ENCODE measurements at regions of chr7 and their contacts with region 1.

Region 1: GRCh38 chr7:149497456-149498261 is at the start of gene ZNF746:
- DNase-seq: peak; percentile 79
- ATAC-seq: peak; percentile 96
- H3K4me3 Mint-ChIP-seq: peak within 1 kb of the TSS; percentile 92
- H3K27ac Mint-ChIP-seq: peak within 1 kb of the TSS; percentile 82
- H3K4me1 Mint-ChIP-seq: peaks cover 24% of the 10 kb centered on the region
- H3K27me3 Mint-ChIP-seq: peaks cover 2% of the 10 kb centered on the region
- CTCF ChIP-seq: no peak
- total RNA-seq, gene ZNF746: 21.0 and 28.4 TPM in 2 replicates

Region 2: DNA sequence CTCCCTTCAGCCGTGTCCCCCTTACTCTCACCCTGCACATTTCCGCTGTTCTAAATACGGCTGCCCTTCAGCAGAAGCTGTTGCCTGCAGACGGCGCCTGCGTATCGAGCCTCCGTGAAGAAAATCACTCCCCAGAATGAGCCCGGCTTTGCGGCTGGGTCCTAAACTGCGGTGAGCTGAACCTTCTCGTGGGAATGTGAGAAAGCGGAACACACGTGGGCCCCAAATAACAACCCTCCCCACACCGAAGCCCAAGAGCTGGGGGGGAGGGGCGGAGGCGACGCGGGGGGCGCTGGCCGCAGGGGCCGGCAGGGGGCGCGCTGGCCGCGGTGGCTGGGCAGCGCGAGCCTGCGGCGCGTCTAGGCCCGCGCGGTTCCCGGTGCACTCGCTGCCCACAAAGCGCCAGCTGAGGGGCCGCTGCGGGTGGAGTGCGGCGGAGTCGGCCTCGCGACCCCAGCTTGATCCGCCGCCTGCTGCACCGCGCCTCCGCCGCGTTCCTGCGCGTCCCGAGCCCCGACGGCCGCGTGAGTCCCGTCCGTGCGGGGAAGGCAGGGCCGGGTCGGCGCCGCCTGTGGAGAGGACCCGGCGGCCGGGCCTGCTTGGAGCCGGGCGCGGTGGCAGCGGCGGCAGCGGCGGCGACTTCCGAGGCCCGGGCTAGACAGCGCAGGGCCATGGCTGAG is 350.4 kb before region 1 on chr7 and contains the start of gene ZNF398:
- CTCF ChIA-PET with region 1: no interaction called
- POLR2A ChIA-PET with region 1: no interaction called
- intact Hi-C with region 1: loop called (anchors 1 kb)
- DNase-seq: peak; percentile 87
- ATAC-seq: peak; percentile 84
- H3K4me3 Mint-ChIP-seq: peak within 1 kb of the TSS; percentile 91
- H3K27ac Mint-ChIP-seq: peak within 1 kb of the TSS; percentile 94
- H3K4me1 Mint-ChIP-seq: peaks cover 32% of the 10 kb centered on the region
- H3K27me3 Mint-ChIP-seq: no peaks in the 10 kb centered on the region
- CTCF ChIP-seq: no peak
- total RNA-seq, gene ZNF398: 15.1 and 17.3 TPM in 2 replicates

Region 3: GRCh38 chr7:149239345-149240191 is 258.1 kb before region 1 on chr7 and contains the start of gene ZNF212:
- CTCF ChIA-PET with region 1: no interaction called
- POLR2A ChIA-PET with region 1: no interaction called
- intact Hi-C with region 1: loop called (anchors 1 kb)
- DNase-seq: peak; percentile 82
- ATAC-seq: peak; percentile 99
- H3K4me3 Mint-ChIP-seq: peak within 1 kb of the TSS; percentile 91
- H3K27ac Mint-ChIP-seq: peak within 1 kb of the TSS; percentile 76
- H3K4me1 Mint-ChIP-seq: peaks cover 37% of the 10 kb centered on the region
- H3K27me3 Mint-ChIP-seq: no peaks in the 10 kb centered on the region
- CTCF ChIP-seq: no peak
- total RNA-seq, gene ZNF212: 17.0 and 21.0 TPM in 2 replicates

Region 4: DNA sequence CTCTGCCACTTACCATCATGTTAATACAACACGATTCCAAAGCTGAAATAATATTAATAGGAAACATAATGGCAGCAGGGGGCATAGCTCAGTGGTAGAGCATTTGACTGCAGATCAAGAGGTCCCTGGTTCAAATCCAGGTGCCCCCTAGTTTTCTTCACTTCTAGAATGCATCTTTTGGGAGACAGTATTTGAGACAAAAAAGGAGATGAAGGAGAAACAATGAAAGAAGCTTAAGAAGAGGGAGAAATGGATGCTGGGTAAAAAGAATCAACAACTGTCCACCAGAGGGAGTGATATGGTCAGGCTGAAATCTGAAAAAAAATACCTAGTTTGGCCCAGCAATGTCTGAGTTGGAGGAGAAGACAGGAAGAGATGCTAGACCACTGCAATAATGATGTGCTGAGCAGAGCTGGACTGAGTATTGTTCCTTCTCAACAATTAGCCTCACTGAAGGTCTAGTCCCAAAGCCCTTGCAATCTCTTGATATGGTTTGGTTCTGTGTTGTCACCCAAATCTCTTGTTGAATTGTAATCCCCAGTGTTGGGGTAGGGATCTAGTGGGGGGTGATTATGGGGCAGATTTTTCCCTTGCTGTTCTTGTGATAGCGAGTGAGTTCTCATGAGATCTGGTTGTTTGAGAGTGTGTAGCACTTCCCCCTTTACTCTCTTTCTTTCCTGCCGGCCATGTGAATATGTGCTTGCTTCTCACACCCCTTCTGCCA is 187.4 kb before region 1 on chr7:
- CTCF ChIA-PET with region 1: interaction called, 3 read pairs
- POLR2A ChIA-PET with region 1: no interaction called
- intact Hi-C with region 1: loop called (anchors 1 kb)
- DNase-seq: no peak
- ATAC-seq: peak; percentile 49
- H3K4me3 Mint-ChIP-seq: no peak overlapping the region
- H3K27ac Mint-ChIP-seq: no peak overlapping the region
- H3K4me1 Mint-ChIP-seq: no peaks in the 10 kb centered on the region
- H3K27me3 Mint-ChIP-seq: peaks cover under 1% of the 10 kb centered on the region
- CTCF ChIP-seq: no peak

Region 5: DNA sequence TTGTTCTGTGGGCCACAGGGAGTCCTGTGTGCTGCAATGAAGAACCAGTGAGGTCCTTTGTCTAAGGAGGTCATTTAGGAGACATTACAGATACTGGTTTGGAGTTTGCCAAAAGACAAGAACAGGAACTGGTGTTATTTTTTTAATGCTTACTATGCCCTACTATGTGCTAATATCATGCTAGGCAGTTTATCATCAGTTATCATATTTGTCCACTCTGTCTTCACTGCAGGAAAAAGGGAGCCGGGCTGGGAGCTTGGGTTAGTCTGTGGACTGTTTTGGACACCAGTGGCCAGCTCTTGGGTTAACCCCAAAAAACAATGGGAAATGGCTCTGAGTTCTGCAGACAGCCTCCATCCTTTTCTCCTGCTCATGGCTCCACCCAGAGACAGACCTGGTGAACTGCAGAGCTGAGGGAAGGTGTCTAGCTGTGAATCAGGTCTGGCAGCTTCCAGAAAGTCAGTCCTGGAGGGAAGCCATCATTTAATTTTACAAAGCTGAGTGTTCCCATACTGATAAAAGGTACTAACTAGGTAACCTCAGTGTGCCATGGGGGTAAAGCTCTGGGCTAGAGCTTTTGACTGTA is 101.2 kb after region 1 on chr7:
- CTCF ChIA-PET with region 1: no interaction called
- POLR2A ChIA-PET with region 1: no interaction called
- intact Hi-C with region 1: loop called (anchors 5 kb)
- DNase-seq: no peak
- ATAC-seq: no peak
- H3K4me3 Mint-ChIP-seq: no peak overlapping the region
- H3K27ac Mint-ChIP-seq: peak overlapping the region; percentile 79
- H3K4me1 Mint-ChIP-seq: peaks cover 30% of the 10 kb centered on the region
- H3K27me3 Mint-ChIP-seq: no peaks in the 10 kb centered on the region
- CTCF ChIP-seq: no peak

Region 6: GRCh38 chr7:149680331-149681025 is 182.8 kb after region 1 on chr7:
- CTCF ChIA-PET with region 1: no interaction called
- POLR2A ChIA-PET with region 1: no interaction called
- intact Hi-C with region 1: no loop called
- DNase-seq: no peak
- ATAC-seq: no peak
- H3K4me3 Mint-ChIP-seq: no peak overlapping the region
- H3K27ac Mint-ChIP-seq: no peak overlapping the region
- H3K4me1 Mint-ChIP-seq: no peaks in the 10 kb centered on the region
- H3K27me3 Mint-ChIP-seq: peaks cover 23% of the 10 kb centered on the region
- CTCF ChIP-seq: no peak

Measured in activated B cell treated with CpG ODN at 0.5 μM for 24 hours (primary cell).